ENCODE measurements at regions of chr19 and their contacts with region 1.

Region 1: GRCh38 chr19:6218491-6219162 is 61.1 kb downstream of the MLLT1 start:
- DNase-seq: peak; percentile 89
- H3K4me3 Mint-ChIP-seq: no peak overlapping the region
- H3K27ac Mint-ChIP-seq: peak overlapping the region; percentile 34
- H3K4me1 Mint-ChIP-seq: no peaks in the 10 kb centered on the region
- H3K27me3 Mint-ChIP-seq: no peaks in the 10 kb centered on the region

Region 2: GRCh38 chr19:6199240-6199983 is 19.2 kb before region 1 on chr19:
- CTCF ChIA-PET with region 1: interaction called, 12 read pairs
- DNase-seq: peak; percentile 99
- H3K4me3 Mint-ChIP-seq: peak overlapping the region; percentile 97
- H3K27ac Mint-ChIP-seq: peak overlapping the region; percentile 92
- H3K4me1 Mint-ChIP-seq: peaks cover 20% of the 10 kb centered on the region
- H3K27me3 Mint-ChIP-seq: peaks cover 2% of the 10 kb centered on the region

Region 3: GRCh38 chr19:6279620-6279930 is 60.9 kb after region 1 on chr19:
- CTCF ChIA-PET with region 1: interaction called, 10 read pairs
- DNase-seq: no peak
- H3K4me3 Mint-ChIP-seq: peak overlapping the region; percentile 65
- H3K27ac Mint-ChIP-seq: no peak overlapping the region
- H3K4me1 Mint-ChIP-seq: peaks cover 34% of the 10 kb centered on the region
- H3K27me3 Mint-ChIP-seq: peaks cover 16% of the 10 kb centered on the region

Region 4: GRCh38 chr19:6297202-6297601 is 78.6 kb after region 1 on chr19:
- CTCF ChIA-PET with region 1: interaction called, 17 read pairs
- DNase-seq: no peak
- H3K4me3 Mint-ChIP-seq: no peak overlapping the region
- H3K27ac Mint-ChIP-seq: no peak overlapping the region
- H3K4me1 Mint-ChIP-seq: no peaks in the 10 kb centered on the region
- H3K27me3 Mint-ChIP-seq: no peaks in the 10 kb centered on the region